ENCODE measurements at regions of chr22 and their contacts with region 1.

Region 1: GRCh38 chr22:28800308-28801077 is at the start of gene XBP1:
- DNase-seq: peak; percentile 90 to 95 (median 94)
- H3K4me3 ChIP-seq: peak within 1 kb of the TSS; percentile 65 to 100 (median 96)
- H3K27ac ChIP-seq: peak within 1 kb of the TSS; percentile 100
- H3K4me1 ChIP-seq: peaks cover 21 to 75% (median 47%) of the 10 kb centered on the region in 4 experiments
- H3K27me3 ChIP-seq: no peaks in the 10 kb centered on the region

Region 2: DNA sequence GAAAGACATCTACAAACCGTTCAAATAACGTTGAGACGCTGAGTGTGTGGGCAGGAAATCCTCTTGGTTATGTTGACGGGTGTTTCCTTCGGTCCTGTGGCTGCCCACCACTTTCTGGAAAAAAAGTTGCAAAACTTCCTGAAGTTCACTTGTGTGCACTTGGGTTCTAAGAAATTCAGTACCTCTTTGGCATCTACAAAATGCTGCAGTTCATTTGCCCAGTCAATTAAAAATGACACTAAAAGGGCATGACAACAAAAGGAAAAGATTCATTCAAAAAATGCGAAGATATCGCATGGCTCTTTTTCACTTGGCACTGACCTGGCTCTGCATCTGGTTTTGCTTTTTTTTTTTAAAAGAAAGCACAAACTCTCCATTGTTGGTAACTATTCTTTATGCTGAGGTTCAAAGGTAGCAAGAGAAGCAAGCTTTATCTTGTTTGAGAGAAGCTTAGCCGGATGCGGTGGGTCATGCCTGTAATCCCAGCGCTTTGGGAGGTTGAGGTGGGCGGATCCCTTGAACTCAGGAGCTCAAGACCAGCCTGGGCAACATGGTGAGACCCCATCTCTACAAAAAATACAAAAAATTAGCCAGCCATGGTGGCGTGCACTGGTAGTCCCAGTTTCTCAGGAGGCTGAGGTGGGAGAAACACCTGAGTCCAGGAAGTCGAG is 10.5 kb after region 1 on chr22:
- CTCF ChIA-PET with region 1: interaction called, 149 read pairs
- POLR2A ChIA-PET with region 1: interaction called, 50 read pairs
- DNase-seq: peak; percentile 92 to 98 (median 97)
- H3K4me3 ChIP-seq: peak overlapping the region in 4 of 7 experiments; percentile 45 to 58 (median 54)
- H3K27ac ChIP-seq: peak overlapping the region; percentile 50 to 73
- H3K4me1 ChIP-seq: peaks cover 34 to 94% (median 77%) of the 10 kb centered on the region in 4 experiments
- H3K27me3 ChIP-seq: no peaks in the 10 kb centered on the region

Region 3: GRCh38 chr22:28817919-28818909 is 17.7 kb after region 1 on chr22:
- CTCF ChIA-PET with region 1: interaction called, 149 read pairs
- POLR2A ChIA-PET with region 1: interaction called, 50 read pairs
- DNase-seq: peak in 1 of 3 donors; percentile 58
- H3K4me3 ChIP-seq: peak overlapping the region in 2 of 7 experiments; percentile 4 to 31
- H3K27ac ChIP-seq: peak overlapping the region; percentile 37 to 59
- H3K4me1 ChIP-seq: peaks cover 24 to 85% (median 80%) of the 10 kb centered on the region in 4 experiments
- H3K27me3 ChIP-seq: no peaks in the 10 kb centered on the region